ENCODE measurements at regions of chr7 and their contacts with region 1.

Region 1: DNA sequence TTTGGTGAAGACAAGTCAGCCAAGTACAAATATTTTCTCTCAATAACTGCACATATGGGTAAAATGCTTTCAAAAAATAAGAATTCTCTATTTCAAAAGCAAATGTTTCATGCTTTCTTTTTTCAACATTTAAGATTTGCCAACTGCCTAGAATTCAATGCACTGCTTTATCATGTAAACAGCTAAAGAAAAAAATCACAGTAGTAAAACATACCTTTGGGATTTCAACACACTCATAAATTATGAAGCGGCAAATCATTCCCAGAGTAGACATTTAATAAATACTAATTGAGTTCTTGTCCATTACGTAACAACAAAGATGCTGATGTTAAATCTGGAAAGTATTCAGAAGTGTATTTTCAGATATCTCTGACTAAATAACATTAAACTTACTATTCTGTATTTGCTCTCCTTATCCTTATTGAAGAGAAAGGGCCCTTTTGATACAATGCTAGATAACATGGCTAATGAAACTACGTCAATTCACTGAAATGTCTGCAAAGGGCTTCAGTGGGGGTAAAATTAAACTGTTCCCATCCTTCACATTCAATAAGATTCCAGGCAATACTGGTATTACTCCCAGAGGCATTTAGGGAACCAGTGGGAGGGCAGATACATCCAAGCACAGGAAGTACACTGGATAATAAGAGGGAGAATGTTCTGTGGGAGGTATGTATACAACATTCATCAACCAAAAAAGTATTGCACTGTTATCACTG is 13.9 kb downstream of the NAPEPLD start:
- DNase-seq: no peak
- ATAC-seq: no peak
- H3K4me3 ChIP-seq: no peak overlapping the region
- H3K27ac ChIP-seq: no peak overlapping the region
- H3K4me1 ChIP-seq: peaks cover 6% of the 10 kb centered on the region
- H3K27me3 ChIP-seq: no peaks in the 10 kb centered on the region
- CTCF ChIP-seq: no peak

Region 2: DNA sequence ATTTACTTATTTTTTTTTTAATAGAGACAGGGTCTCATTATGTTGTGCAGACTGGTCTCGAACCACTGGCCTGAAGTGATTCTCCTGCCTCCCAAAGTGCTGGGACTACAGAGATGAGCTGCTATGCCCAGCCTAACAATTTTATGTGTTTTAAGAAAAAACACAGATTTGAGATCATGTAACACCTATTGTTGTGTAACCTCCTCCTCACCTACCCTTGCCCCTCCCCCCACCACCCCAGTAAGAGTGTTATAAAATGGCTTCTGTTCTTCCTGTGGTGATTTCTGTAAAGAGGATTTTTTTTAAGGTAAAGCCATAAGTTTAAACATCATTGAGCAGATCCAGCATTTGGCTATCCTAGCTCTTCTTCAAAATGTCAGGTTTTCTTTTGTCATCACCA is 52.5 kb before region 1 on chr7:
- intact Hi-C with region 1: loop called in 1 of 2 experiments (anchors 10 kb)
- DNase-seq: no peak
- ATAC-seq: no peak
- H3K4me3 ChIP-seq: no peak overlapping the region
- H3K27ac ChIP-seq: no peak overlapping the region
- H3K4me1 ChIP-seq: no peaks in the 10 kb centered on the region
- H3K27me3 ChIP-seq: no peaks in the 10 kb centered on the region
- CTCF ChIP-seq: no peak